HEK293 (cell line): ENCODE measurements at regions of chr6 and their contacts with region 1.

Region 1: DNA sequence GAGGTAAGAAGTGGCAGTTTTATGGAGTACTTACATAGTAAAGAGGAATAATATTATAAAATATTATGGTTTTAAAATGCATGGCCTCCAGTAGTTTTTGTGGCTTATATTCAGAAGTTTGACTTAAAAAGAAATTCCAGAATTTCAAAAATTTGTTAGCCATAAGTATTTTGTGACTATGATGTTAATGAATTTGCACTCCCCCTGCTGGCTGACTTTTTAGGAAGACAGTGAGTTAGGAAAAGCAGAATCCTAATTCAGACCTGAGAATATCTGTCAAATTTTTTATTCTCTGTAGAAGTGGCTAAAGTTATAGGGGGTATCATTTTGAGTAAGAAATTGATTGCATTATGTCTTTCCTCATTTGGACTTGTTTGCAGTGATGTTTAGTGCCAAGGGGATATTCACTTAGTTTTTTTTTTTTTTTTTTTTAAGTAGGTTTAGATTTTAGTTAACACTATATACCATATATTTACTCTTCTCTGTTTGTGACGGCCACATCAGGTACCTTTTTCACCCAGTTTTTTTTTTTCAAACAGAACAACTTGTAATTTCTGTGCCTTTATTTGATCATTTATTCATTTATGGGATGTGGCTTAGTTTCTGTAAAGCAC is 40.8 kb downstream of the ZFAND3 start:
- H3K4me3 ChIP-seq: no peak overlapping the region
- H3K27ac ChIP-seq: no peak overlapping the region
- H3K4me1 ChIP-seq: peaks cover 4% of the 10 kb centered on the region; the same call in 1 of the 2 replicates
- CTCF ChIP-seq: no peak

Region 2: DNA sequence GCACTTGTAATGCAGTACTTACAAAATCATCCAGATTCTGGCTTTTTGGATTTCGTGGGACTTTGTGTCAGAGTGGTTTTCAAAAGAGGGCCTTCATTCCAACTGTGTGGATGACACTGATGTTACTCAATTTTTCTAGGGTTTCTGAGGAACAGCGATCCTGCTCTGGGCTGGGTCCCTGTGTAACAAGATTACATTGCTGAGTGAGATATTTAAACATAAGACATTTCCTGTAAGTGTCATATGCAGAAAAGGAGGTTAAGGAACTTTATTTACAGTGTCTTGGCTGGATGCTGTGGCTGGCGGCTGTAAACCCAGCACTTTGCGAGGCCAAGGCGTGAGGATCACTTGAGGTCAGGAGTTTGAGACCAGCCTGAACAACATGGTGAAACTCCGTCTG is 34.1 kb before region 1 on chr6:
- CTCF ChIA-PET with region 1: interaction called, 15 read pairs
- POLR2A ChIA-PET with region 1: no interaction called
- H3K4me3 ChIP-seq: no peak overlapping the region
- H3K27ac ChIP-seq: no peak overlapping the region
- H3K4me1 ChIP-seq: peaks cover 34% of the 10 kb centered on the region
- CTCF ChIP-seq: no peak

Region 3: GRCh38 chr6:37889051-37889450 is 28.7 kb after region 1 on chr6:
- CTCF ChIA-PET with region 1: no interaction called
- POLR2A ChIA-PET with region 1: no interaction called
- H3K4me3 ChIP-seq: no peak overlapping the region
- H3K27ac ChIP-seq: no peak overlapping the region
- H3K4me1 ChIP-seq: peaks cover 3% of the 10 kb centered on the region; the same call in 1 of the 2 replicates
- CTCF ChIP-seq: no peak

Region 4: DNA sequence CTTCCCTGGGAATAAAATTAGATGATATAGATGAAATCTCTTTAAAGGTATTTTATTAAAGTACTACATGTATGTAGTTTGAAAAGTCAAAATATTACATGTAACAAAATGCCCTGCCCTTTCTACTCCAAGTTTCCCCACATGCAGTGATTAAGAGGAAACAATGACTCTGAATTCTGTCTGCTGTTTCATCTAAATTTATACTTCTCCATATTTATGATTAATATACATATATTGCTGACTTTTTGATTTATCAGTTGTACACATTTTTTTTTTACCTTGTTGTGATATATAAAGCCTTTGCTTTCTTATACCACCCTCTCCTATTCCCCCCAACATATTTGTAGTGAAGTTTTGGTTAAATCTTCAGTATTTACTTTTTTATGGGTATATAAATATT is 87.1 kb after region 1 on chr6:
- CTCF ChIA-PET with region 1: no interaction called
- POLR2A ChIA-PET with region 1: no interaction called
- H3K4me3 ChIP-seq: no peak overlapping the region
- H3K27ac ChIP-seq: no peak overlapping the region
- H3K4me1 ChIP-seq: peaks cover 10% of the 10 kb centered on the region
- CTCF ChIP-seq: no peak